OCI-LY7 (cell line): ENCODE measurements at regions of chr5 and their contacts with region 1.

Region 1: DNA sequence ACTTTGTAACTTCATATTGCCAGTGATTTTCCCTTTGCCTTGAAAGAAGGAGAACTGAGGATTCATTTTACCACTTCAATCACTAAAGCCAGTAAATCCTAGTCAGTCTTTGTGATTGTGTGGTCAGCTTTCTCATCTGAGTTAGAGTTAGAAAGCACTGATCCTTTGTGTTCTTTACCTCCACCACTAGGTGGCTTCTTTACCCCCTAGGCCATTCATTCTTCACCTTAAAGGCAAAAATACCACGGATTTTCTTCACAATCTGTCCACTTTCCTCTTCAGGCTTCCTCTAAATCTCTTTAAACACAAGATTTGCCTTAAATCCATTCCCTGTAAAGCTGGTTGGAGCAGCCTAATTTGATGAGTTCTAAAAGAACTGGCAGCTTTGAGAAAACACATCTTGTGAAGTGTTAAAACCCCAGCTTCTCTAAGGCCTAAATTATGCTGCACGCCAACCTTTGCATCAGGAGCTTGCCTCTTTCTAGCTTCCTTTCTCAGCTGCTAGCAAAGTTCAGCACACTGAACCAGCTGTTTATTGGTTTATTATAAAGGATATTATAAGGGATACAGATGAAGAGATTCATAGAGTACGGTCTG is 20.4 kb downstream of the BDP1 start:
- DNase-seq: peak; percentile 40
- H3K4me3 ChIP-seq: no peak overlapping the region
- H3K27ac ChIP-seq: no peak overlapping the region
- H3K4me1 ChIP-seq: no peaks in the 10 kb centered on the region
- CTCF ChIP-seq: peak; percentile 88

Region 2: GRCh38 chr5:71508751-71509150 is 32.9 kb after region 1 on chr5:
- CTCF ChIA-PET with region 1: no interaction called
- POLR2A ChIA-PET with region 1: interaction called, 4 read pairs
- intact Hi-C with region 1: loop called (anchors 5 kb)
- DNase-seq: no peak
- H3K4me3 ChIP-seq: no peak overlapping the region
- H3K27ac ChIP-seq: no peak overlapping the region
- H3K4me1 ChIP-seq: no peaks in the 10 kb centered on the region
- CTCF ChIP-seq: no peak

Region 3: DNA sequence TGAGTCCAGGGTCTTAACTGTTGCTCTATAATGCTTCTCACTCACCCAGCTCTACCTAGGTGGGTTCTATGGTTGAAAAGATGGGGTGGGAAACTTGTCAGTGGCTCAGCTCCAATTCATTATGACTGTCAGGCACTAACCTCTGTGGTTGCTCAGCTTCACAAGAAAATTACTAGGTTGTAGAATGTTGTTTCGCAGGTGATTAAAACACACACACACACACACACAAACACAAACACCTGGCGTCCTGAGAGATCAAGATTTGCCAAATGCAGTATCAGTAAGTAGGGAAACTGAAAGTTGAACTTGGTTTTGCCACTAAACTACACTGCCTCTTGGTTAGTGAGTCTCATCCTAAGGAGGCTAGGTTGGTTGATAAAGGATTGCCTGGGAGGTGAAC is 114.0 kb after region 1 on chr5:
- CTCF ChIA-PET with region 1: no interaction called
- POLR2A ChIA-PET with region 1: no interaction called
- intact Hi-C with region 1: no loop called
- DNase-seq: no peak
- H3K4me3 ChIP-seq: no peak overlapping the region
- H3K27ac ChIP-seq: no peak overlapping the region
- H3K4me1 ChIP-seq: peaks cover 19% of the 10 kb centered on the region
- CTCF ChIP-seq: no peak